B cell (primary cell): ENCODE measurements at regions of chr1 and their contacts with region 1.

Region 1: GRCh38 chr1:2391041-2391930 is at the starts of genes MORN1 and RER1:
- DNase-seq: peak; percentile 99
- ATAC-seq: peak; percentile 94
- H3K4me3 ChIP-seq: peak within 1 kb of the TSS; percentile 61 to 92 (median 76)
- H3K4me3 Mint-ChIP-seq: peak within 1 kb of the TSS; percentile 92
- H3K27ac ChIP-seq: peak within 1 kb of the TSS; percentile 24 to 88
- H3K27ac Mint-ChIP-seq: peak within 1 kb of the TSS; percentile 88
- H3K4me1 ChIP-seq: peaks cover 25 to 47% of the 10 kb centered on the region in 2 donors
- H3K4me1 Mint-ChIP-seq: peaks cover 47% of the 10 kb centered on the region
- H3K27me3 ChIP-seq: no peaks in the 10 kb centered on the region
- H3K27me3 Mint-ChIP-seq: no peaks in the 10 kb centered on the region
- CTCF ChIP-seq: no peak
- total RNA-seq, gene MORN1: 30.4 and 32.6 TPM in 2 replicates
- total RNA-seq, gene RER1: 117 and 118 TPM in 2 replicates

Region 2: GRCh38 chr1:2419416-2419815 is 28.1 kb after region 1 on chr1:
- CTCF ChIA-PET with region 1: no interaction called
- POLR2A ChIA-PET with region 1: no interaction called
- intact Hi-C with region 1: no loop called
- DNase-seq: no peak
- ATAC-seq: no peak
- H3K4me3 ChIP-seq: no peak overlapping the region
- H3K4me3 Mint-ChIP-seq: no peak overlapping the region
- H3K27ac ChIP-seq: no peak overlapping the region
- H3K27ac Mint-ChIP-seq: no peak overlapping the region
- H3K4me1 ChIP-seq: peaks cover 25 to 28% of the 10 kb centered on the region in 2 donors
- H3K4me1 Mint-ChIP-seq: peaks cover 24% of the 10 kb centered on the region
- H3K27me3 ChIP-seq: no peaks in the 10 kb centered on the region
- H3K27me3 Mint-ChIP-seq: no peaks in the 10 kb centered on the region
- CTCF ChIP-seq: no peak

Region 3: GRCh38 chr1:2525920-2526823 is 134.9 kb after region 1 on chr1 and contains the start of gene PANK4:
- CTCF ChIA-PET with region 1: interaction called, 3 read pairs
- POLR2A ChIA-PET with region 1: interaction called, 6 read pairs
- intact Hi-C with region 1: loop called (anchors 1 kb)
- DNase-seq: peak; percentile 94
- ATAC-seq: peak; percentile 91
- H3K4me3 ChIP-seq: peak within 1 kb of the TSS; percentile 48 to 96 (median 74)
- H3K4me3 Mint-ChIP-seq: peak within 1 kb of the TSS; percentile 96
- H3K27ac ChIP-seq: peak within 1 kb of the TSS; percentile 41 to 78
- H3K27ac Mint-ChIP-seq: peak within 1 kb of the TSS; percentile 85
- H3K4me1 ChIP-seq: peaks cover 41 to 53% of the 10 kb centered on the region in 2 donors
- H3K4me1 Mint-ChIP-seq: peaks cover 43% of the 10 kb centered on the region
- H3K27me3 ChIP-seq: peaks cover 0 to 24% (median 10%) of the 10 kb centered on the region in 4 experiments
- H3K27me3 Mint-ChIP-seq: no peaks in the 10 kb centered on the region
- CTCF ChIP-seq: no peak
- total RNA-seq, gene PANK4: 80.5 and 86.3 TPM in 2 replicates